ENCODE measurements at regions of chr11 and their contacts with region 1.

Region 1: GRCh38 chr11:36265793-36266628 is 23.2 kb downstream of the COMMD9 start:
- DNase-seq: peak; percentile 84

Region 2: DNA sequence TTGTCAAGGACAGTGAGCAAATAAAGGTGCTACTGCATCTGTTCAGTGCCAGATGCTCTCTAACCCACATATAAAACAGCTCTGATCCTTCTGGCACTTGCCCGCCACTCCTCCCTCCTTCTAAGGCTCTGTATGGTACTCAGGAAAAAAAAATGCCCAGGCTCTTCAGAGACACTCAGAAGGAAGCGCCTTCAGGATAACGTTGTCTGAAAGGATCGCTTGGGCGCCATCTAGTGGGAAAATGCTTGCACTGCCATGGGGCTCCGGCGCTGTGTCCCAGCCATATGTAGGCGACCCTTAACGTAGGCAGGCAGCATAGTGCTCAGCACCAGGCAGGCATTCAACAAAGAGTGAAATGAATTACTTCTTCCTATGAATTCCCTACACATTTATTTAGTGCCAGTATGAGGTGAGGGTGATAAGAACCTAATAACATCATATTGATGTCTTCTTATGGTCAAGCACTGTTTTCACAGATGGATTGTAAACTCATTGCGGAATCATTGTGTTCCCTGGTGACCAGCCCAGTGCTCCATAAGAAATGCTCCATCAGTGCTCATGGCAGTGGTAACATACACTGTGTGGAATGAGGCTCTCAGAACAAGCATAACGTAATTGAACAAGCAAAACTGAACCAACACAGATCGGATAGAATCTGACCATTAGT is 780.2 kb before region 1 on chr11:
- intact Hi-C with region 1: loop called (anchors 5 kb)
- DNase-seq: peak; percentile 84

Region 3: DNA sequence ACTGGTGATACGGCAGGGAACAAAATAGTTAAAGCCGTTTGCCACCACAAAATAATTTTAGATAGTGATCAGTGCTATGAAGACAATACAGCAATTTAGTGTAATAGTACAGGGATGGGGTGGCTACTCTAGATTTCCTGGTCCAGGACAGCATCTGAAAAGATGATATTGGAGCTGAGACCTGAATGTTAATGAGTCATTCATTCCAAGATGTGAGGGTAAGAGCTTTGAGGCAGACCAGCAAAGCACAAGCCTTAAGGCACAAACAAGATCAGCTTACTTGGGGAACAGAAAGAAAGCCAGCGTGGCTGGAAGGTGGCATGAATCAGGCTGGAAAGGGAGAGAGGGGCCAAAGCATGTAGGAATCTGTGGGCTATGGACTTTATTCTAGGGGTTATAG is 471.2 kb before region 1 on chr11:
- intact Hi-C with region 1: no loop called
- DNase-seq: no peak

Region 4: DNA sequence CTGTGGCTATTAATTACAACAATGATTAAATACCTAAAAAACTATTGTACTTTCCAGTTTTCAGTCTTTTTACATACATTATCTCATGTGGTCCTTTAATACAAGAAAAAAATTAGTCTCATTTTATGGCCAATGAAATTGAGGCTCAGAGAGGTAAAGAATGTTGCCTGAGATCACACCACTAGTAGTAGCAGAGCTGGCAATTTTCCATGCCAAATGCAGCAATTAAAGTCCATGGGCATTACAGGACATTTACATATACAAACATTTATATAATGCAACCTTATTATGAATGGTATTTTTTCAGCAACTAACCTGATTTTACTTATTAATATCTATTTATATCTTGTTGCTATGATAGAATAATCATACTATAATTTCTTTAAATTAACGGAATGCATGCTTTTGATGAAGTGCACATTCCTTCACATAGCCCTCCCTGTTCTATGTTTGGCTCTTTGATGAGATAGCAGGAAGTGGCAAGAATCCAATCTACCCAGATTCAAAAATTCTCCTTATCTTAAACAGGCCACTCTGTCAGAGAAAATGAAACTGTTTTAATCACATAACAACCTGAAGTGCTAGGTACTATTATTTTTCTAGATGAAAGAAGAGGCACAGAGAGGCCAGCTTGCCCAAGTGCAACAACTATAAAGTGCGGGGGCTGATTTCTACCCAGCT is 443.1 kb before region 1 on chr11:
- intact Hi-C with region 1: loop called (anchors 5 kb)
- DNase-seq: no peak

Region 5: DNA sequence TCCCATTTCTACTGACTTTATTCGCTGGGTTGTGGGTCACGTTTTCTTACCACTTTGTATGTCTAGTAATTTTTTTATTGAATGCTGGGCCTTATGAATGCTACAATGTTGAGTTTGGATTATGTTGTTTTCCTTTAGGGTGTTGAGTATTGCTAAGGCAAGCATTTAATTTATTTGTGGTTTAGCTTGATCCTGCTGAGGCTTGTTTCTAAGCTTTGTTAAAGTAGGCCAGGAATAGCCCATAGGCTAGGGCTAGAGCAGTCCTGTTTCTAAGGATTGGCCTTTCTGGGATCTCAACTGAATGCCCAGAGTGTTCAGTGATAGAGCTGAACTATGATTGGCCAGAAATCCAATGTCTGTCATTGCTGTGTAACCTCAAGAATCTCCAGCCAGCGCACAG is 378.3 kb before region 1 on chr11:
- intact Hi-C with region 1: no loop called
- DNase-seq: no peak

Region 6: DNA sequence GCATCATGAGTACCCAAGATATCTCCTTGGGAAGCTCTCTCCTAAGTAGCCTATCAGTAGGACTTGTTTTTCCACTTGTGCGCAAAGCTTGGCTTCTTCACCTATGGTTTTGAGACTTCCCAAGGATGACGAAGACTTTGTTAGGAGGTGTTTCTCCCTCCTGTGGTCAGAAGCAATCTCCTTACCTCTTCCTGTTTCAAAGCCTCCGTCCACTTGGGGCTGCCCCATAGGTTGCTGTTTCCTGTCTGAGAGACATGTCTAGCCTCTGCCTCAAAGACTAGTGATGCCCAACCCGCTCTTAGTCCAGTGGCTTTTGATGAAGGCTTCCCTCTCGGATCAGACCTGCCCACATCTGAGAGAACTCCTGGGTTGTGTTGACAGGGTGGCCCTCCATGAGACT is 151.1 kb after region 1 on chr11:
- intact Hi-C with region 1: no loop called
- DNase-seq: no peak

Region 7: GRCh38 chr11:36738292-36738861 is 472.4 kb after region 1 on chr11:
- intact Hi-C with region 1: no loop called
- DNase-seq: no peak